ENCODE measurements at regions of chr17 and their contacts with region 1.

Region 1: DNA sequence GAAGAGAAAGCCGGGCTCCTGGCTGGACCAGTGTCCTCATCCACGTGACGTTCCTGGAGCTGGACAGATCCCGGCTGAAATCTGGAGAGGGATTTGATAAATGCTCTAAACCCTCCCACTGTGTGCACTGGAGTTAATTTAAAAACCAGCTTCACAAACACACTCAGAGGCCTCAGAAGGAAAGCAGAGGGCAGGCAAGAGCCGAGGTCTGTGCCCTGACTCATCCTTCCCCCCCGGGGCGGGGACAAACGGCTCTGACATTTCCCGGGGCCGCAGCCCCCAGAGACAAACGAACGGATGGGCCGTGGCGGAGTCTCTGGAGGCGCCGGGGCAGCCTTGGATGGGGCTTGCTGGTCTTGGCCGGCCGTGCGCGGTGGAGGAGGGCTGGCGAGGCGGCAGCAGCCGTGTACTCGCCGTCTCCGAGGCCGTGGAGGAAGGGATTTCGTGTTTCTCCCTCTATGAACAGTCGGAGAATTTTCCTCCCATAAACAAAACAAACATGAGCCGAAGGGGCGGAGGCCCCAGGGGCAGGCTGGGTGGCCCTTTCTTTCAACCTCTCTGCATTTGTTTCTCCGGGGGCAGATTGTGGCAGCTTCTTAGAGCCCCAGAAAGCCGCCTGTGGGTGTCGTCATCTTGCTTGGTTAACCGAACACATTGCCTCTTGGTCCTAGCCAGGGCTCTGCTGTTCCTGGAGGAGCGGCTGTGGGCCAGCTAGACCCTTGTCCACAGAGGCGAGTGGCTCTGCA is 94.3 kb downstream of the NTN1 start:
- DNase-seq: peak; percentile 75
- ATAC-seq: peak; percentile 85

Region 2: GRCh38 chr17:9021158-9021991 is 94.2 kb before region 1 on chr17 and contains the start of gene NTN1:
- intact Hi-C with region 1: loop called (anchors 10 kb)
- DNase-seq: peak; percentile 71
- ATAC-seq: peak; percentile 79
- total RNA-seq, gene NTN1: 19.4 TPM

Region 3: GRCh38 chr17:9256751-9257629 is 141.4 kb after region 1 on chr17:
- intact Hi-C with region 1: no loop called
- DNase-seq: no peak
- ATAC-seq: no peak